K562 (cell line): ENCODE measurements at regions of chr3 and their contacts with region 1.

Region 1: GRCh38 chr3:4834403-4834866 is 144.8 kb upstream of the BHLHE40 start:
- DNase-seq: peak in 3 of 4 experiments; percentile 38 to 55 (median 40)
- ATAC-seq: peak; percentile 40
- H3K4me3 ChIP-seq: no peak overlapping the region
- H3K27ac ChIP-seq: no peak overlapping the region
- H3K4me1 ChIP-seq: peaks cover 9 to 48% of the 10 kb centered on the region in 2 experiments
- H3K27me3 ChIP-seq: no peaks in the 10 kb centered on the region
- CTCF ChIP-seq: no peak
- EP300 ChIP-seq: no peak
- POLR2A ChIP-seq: no peak
- RAD21 ChIP-seq: 0 out of 4 replicates have a peak, but pooled peaks of 1 of the 2 experiments have one; percentile 5

Region 2: DNA sequence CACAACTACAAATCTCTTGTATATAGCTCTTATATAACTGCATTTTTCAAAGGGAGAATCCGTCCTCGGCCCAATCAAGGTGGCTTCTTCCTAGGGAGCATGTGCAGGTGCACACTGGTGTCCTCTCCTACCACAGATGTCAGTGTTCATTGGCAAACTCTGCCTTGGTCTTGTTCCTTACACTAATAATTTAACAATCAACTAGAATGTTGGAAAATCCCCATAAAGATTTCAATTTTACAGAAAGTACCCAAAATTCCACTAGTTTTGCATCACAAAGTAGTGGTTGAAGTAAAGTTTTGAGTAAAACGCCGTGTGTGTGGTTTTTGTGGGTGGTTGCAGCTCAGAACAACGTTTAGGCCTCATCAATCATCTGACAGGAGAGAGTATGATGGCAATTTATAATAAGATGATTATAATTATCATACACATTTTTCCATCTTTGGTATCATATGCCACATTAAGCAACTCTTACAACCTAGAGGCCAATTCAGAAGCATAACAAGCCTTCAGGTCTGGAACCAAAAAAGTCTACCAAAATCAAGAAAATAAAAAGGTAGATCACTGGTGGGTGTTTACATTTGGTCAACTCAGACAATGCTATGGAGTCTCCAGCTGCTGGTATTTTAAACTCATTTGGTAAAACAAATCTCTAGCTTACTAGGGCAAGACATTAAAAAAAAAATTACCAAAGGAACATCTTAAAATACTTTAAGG is 15.9 kb after region 1 on chr3:
- CTCF ChIA-PET with region 1: no interaction called
- POLR2A ChIA-PET with region 1: interaction called, 27 read pairs
- in situ Hi-C with region 1: no loop called
- intact Hi-C with region 1: no loop called
- DNase-seq: no peak
- ATAC-seq: peak; percentile 39
- H3K4me3 ChIP-seq: no peak overlapping the region
- H3K27ac ChIP-seq: no peak overlapping the region
- H3K4me1 ChIP-seq: peaks cover 0 to 30% of the 10 kb centered on the region in 2 experiments; a peak in 3 of 5 replicates
- H3K27me3 ChIP-seq: no peaks in the 10 kb centered on the region
- CTCF ChIP-seq: no peak
- EP300 ChIP-seq: no peak
- POLR2A ChIP-seq: no peak
- RAD21 ChIP-seq: no peak